SK-N-SH (cell line): ENCODE measurements at regions of chr16 and their contacts with region 1.

Region 1: GRCh38 chr16:63289852-63290460 is 1253.7 kb upstream of the CDH8 start:
- DNase-seq: peak; percentile 48
- H3K4me3 ChIP-seq: peak overlapping the region in 1 of 2 experiments; percentile 31; a peak in 1 of 4 replicates
- H3K27ac ChIP-seq: no peak overlapping the region
- H3K4me1 ChIP-seq: no peaks in the 10 kb centered on the region
- H3K27me3 ChIP-seq: no peaks in the 10 kb centered on the region
- CTCF ChIP-seq: peak; percentile 94
- EP300 ChIP-seq: no peak
- RAD21 ChIP-seq: peak; percentile 96

Region 2: DNA sequence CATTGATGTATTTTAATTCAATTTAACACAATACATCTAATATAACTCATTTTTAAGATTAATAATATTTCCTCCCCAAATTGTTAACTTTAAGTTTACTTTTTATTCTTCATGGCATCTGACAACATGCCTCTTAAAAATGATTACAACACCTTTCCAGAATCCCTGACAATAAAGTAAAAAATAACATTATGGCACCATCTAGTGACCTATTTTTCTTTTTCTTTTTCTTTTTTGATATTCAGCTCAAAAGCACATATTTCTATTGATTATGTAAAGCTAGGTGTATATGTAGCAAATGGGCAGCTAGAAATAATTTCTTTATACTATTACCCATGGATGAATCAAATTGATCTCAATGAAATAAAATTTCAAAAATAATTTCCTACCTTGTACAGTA is 419.4 kb before region 1 on chr16:
- CTCF ChIA-PET with region 1: interaction called, 11 read pairs
- POLR2A ChIA-PET with region 1: no interaction called
- DNase-seq: no peak
- H3K4me3 ChIP-seq: no peak overlapping the region
- H3K27ac ChIP-seq: no peak overlapping the region
- H3K4me1 ChIP-seq: no peaks in the 10 kb centered on the region; a peak in 1 of 4 replicates
- H3K27me3 ChIP-seq: no peaks in the 10 kb centered on the region
- CTCF ChIP-seq: no peak
- EP300 ChIP-seq: no peak
- RAD21 ChIP-seq: peak; percentile 65

Region 3: GRCh38 chr16:63239065-63239464 is 50.9 kb before region 1 on chr16:
- CTCF ChIA-PET with region 1: no interaction called
- POLR2A ChIA-PET with region 1: no interaction called
- DNase-seq: no peak
- H3K4me3 ChIP-seq: no peak overlapping the region
- H3K27ac ChIP-seq: no peak overlapping the region
- H3K4me1 ChIP-seq: no peaks in the 10 kb centered on the region
- H3K27me3 ChIP-seq: no peaks in the 10 kb centered on the region
- CTCF ChIP-seq: no peak
- EP300 ChIP-seq: no peak
- RAD21 ChIP-seq: no peak

Region 4: GRCh38 chr16:63346000-63346399 is 56.0 kb after region 1 on chr16:
- CTCF ChIA-PET with region 1: no interaction called
- POLR2A ChIA-PET with region 1: no interaction called
- DNase-seq: no peak
- H3K4me3 ChIP-seq: no peak overlapping the region
- H3K27ac ChIP-seq: no peak overlapping the region
- H3K4me1 ChIP-seq: no peaks in the 10 kb centered on the region; a peak in 1 of 4 replicates
- H3K27me3 ChIP-seq: no peaks in the 10 kb centered on the region
- CTCF ChIP-seq: no peak
- EP300 ChIP-seq: no peak
- RAD21 ChIP-seq: no peak